AG04449 (cell line): ENCODE measurements at regions of chr7 and their contacts with region 1.

Region 1: DNA sequence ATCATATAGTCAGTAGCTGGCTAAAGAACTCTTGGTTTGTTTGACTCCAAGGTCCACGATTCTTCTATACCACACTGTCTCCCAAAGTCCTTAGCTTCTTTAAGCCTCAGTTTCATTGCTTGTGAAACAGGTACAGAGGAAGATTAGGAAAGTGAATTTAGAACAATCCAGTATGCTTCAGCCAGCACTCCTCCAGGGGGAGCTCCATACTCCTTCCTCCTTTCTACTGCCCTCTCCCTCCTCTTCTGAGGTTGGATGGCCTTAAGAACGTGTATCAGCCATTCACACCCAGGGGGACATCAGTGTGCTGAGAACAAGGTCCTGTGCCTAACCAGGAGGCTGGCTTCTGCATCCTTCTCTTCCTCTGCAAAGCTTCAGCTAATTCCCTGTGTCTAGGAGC is 54.8 kb upstream of the CALD1 start:
- DNase-seq: no peak
- H3K4me3 ChIP-seq: no peak overlapping the region
- CTCF ChIP-seq: peak; percentile 69

Region 2: DNA sequence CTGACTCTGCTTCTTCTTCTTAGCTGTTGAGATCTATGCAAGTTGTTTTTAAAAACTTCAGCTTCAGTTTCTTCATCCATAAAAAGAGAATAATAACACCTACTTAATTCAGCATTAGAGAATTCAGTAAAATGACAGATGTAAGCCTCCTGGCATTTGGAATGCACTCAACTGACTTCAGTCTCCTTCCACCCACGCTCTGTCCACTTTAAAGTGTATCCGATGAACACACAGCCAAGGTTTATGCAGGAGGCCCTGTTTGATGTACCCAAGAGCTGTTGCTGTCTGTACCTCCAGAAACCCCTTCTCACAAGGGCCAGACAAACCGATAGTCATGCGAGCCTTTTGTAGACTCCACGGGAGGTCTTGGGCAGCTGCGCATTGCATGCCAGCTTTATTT is 380.8 kb before region 1 on chr7:
- CTCF ChIA-PET with region 1: no interaction called
- POLR2A ChIA-PET with region 1: no interaction called
- DNase-seq: no peak
- H3K4me3 ChIP-seq: no peak overlapping the region
- CTCF ChIP-seq: no peak

Region 3: GRCh38 chr7:134565643-134566136 is 158.9 kb before region 1 on chr7:
- CTCF ChIA-PET with region 1: no interaction called
- POLR2A ChIA-PET with region 1: no interaction called
- DNase-seq: no peak
- H3K4me3 ChIP-seq: no peak overlapping the region
- CTCF ChIP-seq: no peak

Region 4: GRCh38 chr7:134710859-134711624 is 13.6 kb before region 1 on chr7:
- CTCF ChIA-PET with region 1: interaction called, 24 read pairs
- POLR2A ChIA-PET with region 1: no interaction called
- DNase-seq: no peak
- H3K4me3 ChIP-seq: no peak overlapping the region
- CTCF ChIP-seq: no peak

Region 5: GRCh38 chr7:134742688-134743350 is 18.2 kb after region 1 on chr7:
- CTCF ChIA-PET with region 1: interaction called, 96 read pairs
- POLR2A ChIA-PET with region 1: no interaction called
- DNase-seq: peak; percentile 89
- H3K4me3 ChIP-seq: no peak overlapping the region
- CTCF ChIP-seq: no peak

Region 6: GRCh38 chr7:134755401-134756022 is 30.9 kb after region 1 on chr7:
- CTCF ChIA-PET with region 1: interaction called, 44 read pairs
- POLR2A ChIA-PET with region 1: no interaction called
- DNase-seq: no peak
- H3K4me3 ChIP-seq: no peak overlapping the region
- CTCF ChIP-seq: peak; percentile 69

Region 7: GRCh38 chr7:134811765-134812164 is 87.2 kb after region 1 on chr7:
- CTCF ChIA-PET with region 1: interaction called, 13 read pairs
- POLR2A ChIA-PET with region 1: no interaction called
- DNase-seq: no peak
- H3K4me3 ChIP-seq: no peak overlapping the region
- CTCF ChIP-seq: no peak